ENCODE measurements at regions of chrX and their contacts with region 1.

Region 1: DNA sequence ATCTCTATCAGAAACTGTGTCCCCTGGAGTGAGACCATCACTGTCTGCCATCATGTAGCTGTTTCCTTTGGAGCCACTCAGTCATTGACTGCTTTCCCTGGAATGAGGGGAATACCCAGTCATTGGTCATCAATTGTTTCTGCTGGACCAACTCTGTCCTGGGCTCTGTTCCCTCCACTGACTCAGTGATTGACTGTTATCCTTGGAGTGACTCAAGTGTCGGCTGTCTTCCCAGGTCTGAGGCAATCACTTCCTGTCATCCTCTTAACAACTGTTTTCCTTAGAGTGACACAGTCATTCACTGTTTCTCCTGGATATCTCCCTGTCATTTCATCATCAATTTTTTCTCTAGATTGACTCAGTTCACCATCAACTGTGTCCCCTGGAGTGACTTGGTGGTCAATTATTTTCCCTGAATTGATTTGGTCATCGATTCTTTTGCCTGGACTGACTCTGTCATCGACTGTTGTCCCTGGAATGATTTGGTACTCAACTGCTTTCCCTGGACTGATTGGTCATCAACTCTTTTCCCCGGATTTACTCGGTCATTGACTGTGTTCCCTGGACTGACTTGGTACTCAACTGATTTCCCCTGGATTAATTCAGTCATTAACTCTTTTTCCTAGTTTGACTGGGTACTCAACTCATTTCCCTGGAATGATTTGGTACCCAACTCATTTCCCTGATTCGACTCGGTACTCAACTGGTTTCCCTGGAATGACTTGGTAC is 327.9 kb upstream of the VCX start:
- DNase-seq: peak; percentile 51
- H3K4me3 ChIP-seq: no peak overlapping the region
- H3K27ac ChIP-seq: 0 out of 2 replicates have a peak overlapping the region, but pooled peaks have one; percentile 12
- H3K4me1 ChIP-seq: no peaks in the 10 kb centered on the region
- H3K27me3 ChIP-seq: no peaks in the 10 kb centered on the region

Region 2: DNA sequence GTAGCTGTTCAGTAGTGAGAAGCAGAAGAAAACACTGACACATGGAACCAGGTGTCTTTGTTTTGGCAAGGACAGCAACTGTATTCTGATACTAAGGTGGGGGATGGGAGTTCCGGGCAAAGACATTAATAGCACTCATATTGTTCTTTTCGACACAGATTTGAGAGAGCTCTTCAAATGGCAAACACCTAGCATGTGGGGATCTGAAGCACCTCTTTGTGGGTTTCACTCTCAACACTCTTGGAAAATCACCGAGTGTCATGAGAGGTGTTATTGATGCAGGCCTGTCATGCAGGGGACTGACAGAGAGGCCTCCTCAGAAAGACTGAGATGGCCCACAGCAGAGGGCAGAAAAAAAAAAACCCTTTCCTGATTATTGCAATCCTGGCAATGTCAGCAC is 99.6 kb after region 1 on chrX:
- in situ Hi-C with region 1: loop called (anchors 25 kb)
- DNase-seq: no peak
- H3K4me3 ChIP-seq: no peak overlapping the region
- H3K27ac ChIP-seq: no peak overlapping the region
- H3K4me1 ChIP-seq: no peaks in the 10 kb centered on the region
- H3K27me3 ChIP-seq: no peaks in the 10 kb centered on the region

Region 3: DNA sequence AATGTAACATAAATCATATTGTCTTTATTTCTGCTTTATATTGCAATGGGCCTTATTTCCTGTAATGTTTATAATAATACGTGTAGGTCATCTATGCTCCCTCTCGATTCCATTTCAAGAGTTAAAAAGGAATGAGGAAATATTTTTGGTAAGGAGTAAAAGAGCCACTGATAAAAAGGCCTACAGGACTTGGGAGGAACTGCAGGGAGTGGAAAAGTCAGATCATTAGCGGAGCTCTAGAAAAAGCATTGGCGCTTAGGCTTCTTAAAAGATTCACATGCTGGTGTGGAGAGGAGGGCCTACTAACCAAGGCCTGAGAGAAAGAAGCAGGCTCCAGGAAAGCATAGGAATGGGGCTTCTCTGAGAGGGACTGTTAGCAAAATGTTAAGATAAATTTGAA is 495.1 kb after region 1 on chrX:
- in situ Hi-C with region 1: no loop called
- DNase-seq: no peak
- H3K4me3 ChIP-seq: no peak overlapping the region
- H3K27ac ChIP-seq: no peak overlapping the region
- H3K4me1 ChIP-seq: no peaks in the 10 kb centered on the region
- H3K27me3 ChIP-seq: no peaks in the 10 kb centered on the region

Measured in GM23248 (cell line).